AG04450 (cell line): ENCODE measurements at regions of chr3 and their contacts with region 1.

Region 1: DNA sequence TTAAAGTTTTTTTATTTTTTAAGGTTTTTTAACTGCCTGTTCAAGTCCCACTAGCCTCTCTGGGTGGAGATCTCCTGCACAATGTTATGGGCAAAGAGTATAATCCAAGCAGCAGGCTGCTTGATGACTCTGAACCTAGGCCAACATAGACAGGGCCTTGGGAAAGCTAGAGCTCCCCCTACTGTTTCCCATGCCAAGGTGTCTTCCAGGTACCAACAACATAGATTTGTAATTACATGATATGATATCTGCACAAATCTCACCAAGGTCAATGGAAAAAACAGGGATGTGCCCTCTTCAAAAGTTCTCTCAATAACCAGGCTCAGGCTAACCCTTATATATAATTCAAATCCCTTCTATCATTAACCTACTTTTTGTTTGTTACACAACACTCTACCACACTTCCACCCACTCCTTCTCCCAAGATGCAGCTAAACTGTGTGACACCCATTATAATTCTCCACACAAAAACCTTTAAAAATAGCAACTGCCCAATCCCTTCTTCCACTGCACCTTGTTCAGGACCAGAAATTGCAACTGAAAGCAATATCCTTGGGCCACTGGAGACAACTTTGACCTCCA is 43.8 kb downstream of the RBM15B start:
- DNase-seq: no peak
- H3K4me3 ChIP-seq: no peak overlapping the region
- H3K27ac ChIP-seq: no peak overlapping the region
- H3K27me3 ChIP-seq: no peaks in the 10 kb centered on the region
- CTCF ChIP-seq: peak; percentile 68

Region 2: DNA sequence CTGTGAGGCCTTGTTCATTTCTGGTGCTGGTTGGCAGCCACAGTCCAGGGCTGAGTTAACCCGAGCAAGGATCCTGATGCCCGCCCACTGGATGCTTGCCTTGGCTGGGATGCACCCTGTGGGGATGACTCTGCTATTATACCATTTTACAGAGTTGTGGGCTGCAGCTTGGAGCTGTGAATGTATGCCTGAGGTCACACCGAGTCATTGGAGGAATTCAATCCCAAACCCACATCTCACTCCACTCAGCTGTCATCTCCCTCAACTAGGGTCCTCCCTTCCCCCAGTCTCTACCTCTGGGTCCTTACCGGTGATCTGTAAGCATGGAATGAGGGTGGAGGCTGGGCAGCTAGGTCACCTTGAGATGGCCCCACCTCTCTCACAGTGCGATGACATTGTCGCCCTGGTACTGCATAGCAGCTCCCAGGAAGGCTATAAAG is 795.8 kb before region 1 on chr3:
- CTCF ChIA-PET with region 1: no interaction called
- POLR2A ChIA-PET with region 1: no interaction called
- DNase-seq: peak; percentile 26
- H3K4me3 ChIP-seq: no peak overlapping the region
- H3K27ac ChIP-seq: peak overlapping the region; percentile 31
- H3K27me3 ChIP-seq: no peaks in the 10 kb centered on the region
- CTCF ChIP-seq: no peak

Region 3: DNA sequence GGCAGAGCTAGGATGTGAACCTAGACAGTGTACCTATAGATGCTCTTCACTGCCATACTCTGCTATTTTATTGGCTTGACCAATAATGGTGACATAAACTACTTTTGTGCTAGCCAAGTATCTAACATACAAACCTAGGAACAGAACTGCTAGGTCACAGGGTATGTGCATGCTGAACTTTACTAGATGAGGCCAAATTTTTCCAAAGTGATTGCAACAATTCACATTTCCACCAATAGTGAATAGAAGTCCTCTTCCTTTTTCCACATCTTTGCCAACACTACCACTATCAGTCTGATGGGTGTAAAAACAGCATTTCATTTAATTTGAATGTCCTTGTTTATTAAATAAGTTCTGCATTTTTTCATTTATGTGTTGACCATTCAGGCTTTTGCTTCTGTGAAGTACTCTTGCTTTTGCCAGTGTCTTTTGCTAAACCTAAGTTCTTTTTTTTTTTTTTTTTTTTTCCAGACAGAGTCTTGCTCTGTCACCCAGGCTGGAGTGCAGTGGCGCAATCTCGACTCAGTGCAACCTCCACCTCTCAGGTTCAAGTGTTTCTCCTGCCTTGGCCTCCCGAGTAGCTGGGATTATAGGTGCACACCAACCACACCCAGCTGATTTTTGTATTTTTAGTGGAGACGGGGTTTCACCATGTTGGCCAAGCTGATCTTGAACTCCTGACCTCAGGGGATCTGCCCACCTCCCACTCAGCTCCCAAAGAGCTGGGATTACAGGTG is 10.9 kb after region 1 on chr3:
- CTCF ChIA-PET with region 1: interaction called, 13 read pairs
- POLR2A ChIA-PET with region 1: no interaction called
- DNase-seq: no peak
- H3K4me3 ChIP-seq: no peak overlapping the region
- H3K27ac ChIP-seq: no peak overlapping the region
- H3K27me3 ChIP-seq: no peaks in the 10 kb centered on the region
- CTCF ChIP-seq: no peak